ENCODE measurements at regions of chr3 and their contacts with region 1.

Region 1: GRCh38 chr3:105366326-105367062 is at the start of gene ALCAM:
- DNase-seq: peak; percentile 99
- ATAC-seq: peak; percentile 84
- H3K4me3 ChIP-seq: peak within 1 kb of the TSS; percentile 78
- H3K27ac ChIP-seq: peak within 1 kb of the TSS; percentile 88
- H3K4me1 ChIP-seq: no peaks in the 10 kb centered on the region; the same call in 1 of the 2 replicates
- H3K27me3 ChIP-seq: no peaks in the 10 kb centered on the region
- CTCF ChIP-seq: peak; percentile 97
- POLR2A ChIP-seq: peak; percentile 78
- RAD21 ChIP-seq: peak; percentile 93
- total RNA-seq, gene ALCAM: 400 and 423 TPM in 2 replicates

Region 2: GRCh38 chr3:104273046-104273649 is 1093.3 kb before region 1 on chr3:
- CTCF ChIA-PET with region 1: interaction called, 5 read pairs
- POLR2A ChIA-PET with region 1: no interaction called
- dilution Hi-C with region 1: no loop called
- in situ Hi-C with region 1: loop called (anchors 10 kb)
- intact Hi-C with region 1: loop called (anchors 1 kb)
- DNase-seq: peak; percentile 53
- ATAC-seq: peak; percentile 76
- H3K4me3 ChIP-seq: no peak overlapping the region
- H3K27ac ChIP-seq: no peak overlapping the region
- H3K4me1 ChIP-seq: no peaks in the 10 kb centered on the region
- H3K27me3 ChIP-seq: no peaks in the 10 kb centered on the region; the same call in 1 of the 2 replicates
- CTCF ChIP-seq: peak; percentile 84
- POLR2A ChIP-seq: no peak
- RAD21 ChIP-seq: peak; percentile 86

Region 3: DNA sequence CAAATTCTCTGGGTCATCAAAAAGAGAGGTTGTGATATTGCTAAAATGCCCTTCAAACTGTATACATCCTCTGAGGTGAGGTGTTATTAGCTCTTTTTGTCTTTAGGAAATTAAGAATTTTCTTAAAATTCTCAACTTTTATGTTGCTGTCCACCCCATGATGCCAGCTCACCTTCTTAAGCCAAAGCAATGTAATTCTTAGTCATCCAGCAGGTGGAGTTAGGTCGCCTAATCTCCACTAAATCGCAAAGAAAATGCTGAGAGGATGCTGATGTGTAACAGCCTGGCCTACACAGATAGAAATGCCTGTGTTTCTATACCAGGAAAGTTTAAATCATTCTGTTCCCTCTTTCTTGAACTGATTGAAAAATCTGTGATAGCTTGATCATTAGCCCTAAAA is 769.9 kb before region 1 on chr3:
- CTCF ChIA-PET with region 1: interaction called, 3 read pairs
- POLR2A ChIA-PET with region 1: no interaction called
- dilution Hi-C with region 1: no loop called
- in situ Hi-C with region 1: loop called (anchors 10 kb)
- intact Hi-C with region 1: loop called (anchors 2 kb)
- DNase-seq: peak; percentile 67
- ATAC-seq: peak; percentile 72
- H3K4me3 ChIP-seq: no peak overlapping the region
- H3K27ac ChIP-seq: no peak overlapping the region
- H3K4me1 ChIP-seq: no peaks in the 10 kb centered on the region
- H3K27me3 ChIP-seq: no peaks in the 10 kb centered on the region
- CTCF ChIP-seq: peak; percentile 50
- POLR2A ChIP-seq: no peak
- RAD21 ChIP-seq: peak; percentile 58

Region 4: GRCh38 chr3:104763007-104763406 is 603.5 kb before region 1 on chr3:
- CTCF ChIA-PET with region 1: no interaction called
- POLR2A ChIA-PET with region 1: no interaction called
- dilution Hi-C with region 1: no loop called
- in situ Hi-C with region 1: no loop called
- intact Hi-C with region 1: loop called (anchors 10 kb)
- DNase-seq: peak; percentile 44
- ATAC-seq: no peak
- H3K4me3 ChIP-seq: no peak overlapping the region
- H3K27ac ChIP-seq: no peak overlapping the region
- H3K4me1 ChIP-seq: peaks cover 2% of the 10 kb centered on the region
- H3K27me3 ChIP-seq: no peaks in the 10 kb centered on the region
- CTCF ChIP-seq: no peak
- POLR2A ChIP-seq: no peak
- RAD21 ChIP-seq: no peak

Region 5: DNA sequence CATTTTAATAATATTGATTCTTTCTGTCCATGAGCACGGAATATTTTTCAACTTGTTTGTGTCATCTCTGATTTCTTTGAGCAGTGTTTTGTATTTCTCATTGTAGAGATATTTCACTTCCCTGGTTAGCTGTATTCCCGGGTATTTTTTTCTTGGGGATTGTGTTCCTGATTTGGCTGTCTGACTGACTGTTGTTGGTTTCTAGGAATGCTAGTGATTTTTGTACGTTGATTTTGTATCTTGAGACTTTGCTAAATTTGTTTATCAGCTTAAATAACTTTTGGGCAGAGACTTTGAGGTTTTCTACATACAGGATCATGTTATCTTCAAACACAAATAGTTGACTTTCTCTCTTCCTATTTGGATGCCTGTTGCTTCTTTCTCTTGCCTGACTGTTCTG is 418.6 kb before region 1 on chr3:
- CTCF ChIA-PET with region 1: interaction called, 4 read pairs
- POLR2A ChIA-PET with region 1: no interaction called
- dilution Hi-C with region 1: no loop called
- in situ Hi-C with region 1: no loop called
- intact Hi-C with region 1: loop called (anchors 5 kb)
- DNase-seq: peak; percentile 79
- ATAC-seq: peak; percentile 24; the same call in 1 of the 2 replicates
- H3K4me3 ChIP-seq: no peak overlapping the region
- H3K27ac ChIP-seq: no peak overlapping the region
- H3K4me1 ChIP-seq: peaks cover 4% of the 10 kb centered on the region
- H3K27me3 ChIP-seq: no peaks in the 10 kb centered on the region
- CTCF ChIP-seq: no peak
- POLR2A ChIP-seq: no peak
- RAD21 ChIP-seq: no peak

Region 6: DNA sequence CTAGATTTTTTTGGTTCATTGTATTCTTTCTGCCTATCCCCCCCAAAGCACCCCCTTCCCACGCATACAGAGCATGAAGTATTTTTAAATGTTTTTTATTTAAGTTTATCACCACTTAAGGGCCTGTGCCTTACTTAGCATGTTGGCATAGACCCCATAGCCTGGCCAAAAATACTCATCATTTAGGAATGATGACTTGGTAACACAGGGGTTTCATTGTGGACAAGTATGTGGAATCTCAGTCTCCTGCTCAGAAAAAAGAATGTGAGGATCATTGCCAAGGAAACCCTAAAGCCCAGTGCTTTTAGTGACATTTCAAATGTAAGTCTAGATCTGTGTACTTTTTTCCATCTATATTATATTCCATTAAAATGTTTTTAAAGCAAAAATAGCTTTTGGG is 146.5 kb after region 1 on chr3:
- CTCF ChIA-PET with region 1: interaction called, 11 read pairs
- POLR2A ChIA-PET with region 1: interaction called, 3 read pairs
- dilution Hi-C with region 1: no loop called
- in situ Hi-C with region 1: no loop called
- intact Hi-C with region 1: loop called (anchors 1 kb)
- DNase-seq: peak; percentile 78
- ATAC-seq: peak; percentile 80
- H3K4me3 ChIP-seq: no peak overlapping the region
- H3K27ac ChIP-seq: no peak overlapping the region
- H3K4me1 ChIP-seq: peaks cover 5% of the 10 kb centered on the region; the same call in 1 of the 2 replicates
- H3K27me3 ChIP-seq: no peaks in the 10 kb centered on the region
- CTCF ChIP-seq: no peak
- POLR2A ChIP-seq: no peak
- RAD21 ChIP-seq: no peak

Region 7: DNA sequence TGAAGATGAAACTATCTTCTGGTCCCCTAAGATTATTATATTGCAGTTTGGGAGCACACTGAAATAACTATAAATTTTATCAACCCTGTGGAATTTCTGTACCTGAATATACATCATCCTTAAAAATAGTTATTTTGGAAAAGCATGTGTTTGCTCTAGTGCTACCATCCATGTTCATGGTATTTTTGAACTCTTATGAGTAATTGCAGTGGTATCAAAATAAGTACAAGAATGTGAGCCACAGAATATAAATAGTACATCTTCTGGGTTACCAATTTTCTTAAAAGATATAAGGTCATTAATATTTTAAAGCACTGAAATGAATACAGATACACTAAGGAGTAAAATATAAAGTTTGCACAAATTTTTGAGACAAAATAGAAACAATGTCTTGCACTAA is 295.8 kb after region 1 on chr3:
- CTCF ChIA-PET with region 1: no interaction called
- POLR2A ChIA-PET with region 1: no interaction called
- dilution Hi-C with region 1: no loop called
- in situ Hi-C with region 1: no loop called
- intact Hi-C with region 1: no loop called
- DNase-seq: no peak
- ATAC-seq: peak; percentile 21; the same call in 1 of the 2 replicates
- H3K4me3 ChIP-seq: no peak overlapping the region
- H3K27ac ChIP-seq: no peak overlapping the region
- H3K4me1 ChIP-seq: peaks cover 2% of the 10 kb centered on the region; the same call in 1 of the 2 replicates
- H3K27me3 ChIP-seq: no peaks in the 10 kb centered on the region
- CTCF ChIP-seq: no peak
- POLR2A ChIP-seq: no peak
- RAD21 ChIP-seq: no peak

Region 8: GRCh38 chr3:106609666-106610301 is 1243.3 kb after region 1 on chr3:
- CTCF ChIA-PET with region 1: no interaction called
- POLR2A ChIA-PET with region 1: no interaction called
- dilution Hi-C with region 1: no loop called
- in situ Hi-C with region 1: no loop called
- intact Hi-C with region 1: loop called (anchors 5 kb)
- DNase-seq: peak; percentile 93
- ATAC-seq: peak; percentile 90
- H3K4me3 ChIP-seq: no peak overlapping the region
- H3K27ac ChIP-seq: no peak overlapping the region
- H3K4me1 ChIP-seq: peaks cover 4% of the 10 kb centered on the region
- H3K27me3 ChIP-seq: no peaks in the 10 kb centered on the region
- CTCF ChIP-seq: peak; percentile 98
- POLR2A ChIP-seq: 0 out of 2 replicates have a peak, but pooled peaks have one; percentile 33
- RAD21 ChIP-seq: peak; percentile 97